ENCODE measurements at regions of chr2 and their contacts with region 1.

Region 1: GRCh38 chr2:179842498-179843153 is 18.8 kb downstream of the ZNF385B start:
- DNase-seq: no peak
- ATAC-seq: no peak
- H3K4me3 ChIP-seq: no peak overlapping the region
- H3K27ac ChIP-seq: no peak overlapping the region
- H3K4me1 ChIP-seq: no peaks in the 10 kb centered on the region
- H3K27me3 ChIP-seq: no peaks in the 10 kb centered on the region

Region 2: DNA sequence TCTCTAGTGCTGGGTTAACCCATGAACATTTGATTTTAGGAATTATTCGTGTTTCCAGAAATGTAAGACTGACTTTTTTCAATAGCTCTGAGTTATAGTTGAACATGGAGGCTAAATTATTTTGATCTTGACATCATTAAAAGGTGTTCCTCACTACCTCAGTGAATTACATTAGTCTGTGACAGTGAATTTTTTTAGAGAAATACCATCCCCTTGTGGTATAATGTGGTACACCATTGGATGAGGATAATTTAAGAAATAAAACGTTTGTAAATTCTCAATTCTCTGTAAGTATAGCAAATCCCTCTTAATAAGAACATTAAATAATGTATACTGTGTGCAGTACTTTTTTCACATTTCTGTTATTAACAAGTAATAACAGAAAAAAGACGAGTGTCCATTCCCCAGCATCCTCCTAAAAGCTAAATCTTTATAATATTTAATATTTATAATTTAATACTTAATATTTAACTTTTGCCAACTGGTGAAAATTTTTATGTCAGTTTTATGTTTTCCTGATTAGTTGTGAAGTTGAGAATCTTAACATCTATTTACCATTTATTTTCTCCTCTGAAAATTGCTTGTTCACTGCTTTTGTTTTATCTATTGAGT is 234.8 kb after region 1 on chr2:
- intact Hi-C with region 1: loop called in 1 of 2 experiments (anchors 5 kb)
- DNase-seq: no peak
- ATAC-seq: no peak
- H3K4me3 ChIP-seq: no peak overlapping the region
- H3K27ac ChIP-seq: no peak overlapping the region
- H3K4me1 ChIP-seq: no peaks in the 10 kb centered on the region
- H3K27me3 ChIP-seq: no peaks in the 10 kb centered on the region

Measured in aorta (tissue), 5 donors.